CD4-positive, alpha-beta memory T cell (primary cell): ENCODE measurements at regions of chr2 and their contacts with region 1.

Region 1: GRCh38 chr2:231463698-231464575 is at the start of gene NCL:
- DNase-seq: peak; percentile 90 to 96 (median 92)
- H3K4me3 ChIP-seq: peak within 1 kb of the TSS; percentile 77 to 92
- H3K4me3 Mint-ChIP-seq: peak within 1 kb of the TSS; percentile 92 to 98 (median 96)
- H3K27ac ChIP-seq: peak within 1 kb of the TSS; percentile 96
- H3K27ac Mint-ChIP-seq: peak within 1 kb of the TSS; percentile 99 to 100 (median 99)
- H3K4me1 ChIP-seq: peaks cover 51% of the 10 kb centered on the region
- H3K4me1 Mint-ChIP-seq: peaks cover 31 to 59% (median 45%) of the 10 kb centered on the region in 4 donors
- H3K27me3 ChIP-seq: no peaks in the 10 kb centered on the region
- H3K27me3 Mint-ChIP-seq: peaks cover 0 to 3% of the 10 kb centered on the region in 2 donors
- total RNA-seq, gene NCL: 380 to 390 TPM

Region 2: DNA sequence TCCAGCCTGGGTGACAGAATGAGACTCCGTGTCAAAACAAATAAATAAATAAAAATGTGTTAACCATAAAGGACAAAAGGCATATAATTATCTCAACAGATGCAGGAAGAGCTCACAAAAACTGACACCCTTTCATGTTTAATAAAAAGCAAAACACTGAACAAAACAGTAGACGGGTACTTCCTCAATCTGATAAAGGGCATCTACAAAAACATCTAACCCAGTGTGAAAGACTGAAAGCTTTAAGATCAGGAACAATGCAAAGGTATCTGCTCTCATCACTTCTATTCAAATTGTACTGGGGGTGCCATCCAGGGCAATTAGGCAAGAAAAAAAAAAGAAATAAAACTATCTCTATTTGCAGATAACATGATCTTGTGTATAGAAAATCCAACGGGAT is 12.0 kb after region 1 on chr2:
- CTCF ChIA-PET with region 1: interaction called, 111 read pairs
- POLR2A ChIA-PET with region 1: interaction called, 128 read pairs
- intact Hi-C with region 1: no loop called
- DNase-seq: no peak
- H3K4me3 ChIP-seq: no peak overlapping the region
- H3K4me3 Mint-ChIP-seq: no peak overlapping the region
- H3K27ac ChIP-seq: no peak overlapping the region
- H3K27ac Mint-ChIP-seq: peak overlapping the region in 1 of 7 donors; percentile 74
- H3K4me1 ChIP-seq: no peaks in the 10 kb centered on the region
- H3K4me1 Mint-ChIP-seq: peaks cover 0 to 2% (median 0%) of the 10 kb centered on the region in 4 donors
- H3K27me3 ChIP-seq: no peaks in the 10 kb centered on the region
- H3K27me3 Mint-ChIP-seq: peaks cover 0 to 3% of the 10 kb centered on the region in 2 donors

Region 3: GRCh38 chr2:231482806-231483391 is 19.0 kb after region 1 on chr2:
- CTCF ChIA-PET with region 1: interaction called, 111 read pairs
- POLR2A ChIA-PET with region 1: interaction called, 128 read pairs
- intact Hi-C with region 1: loop called (anchors 2 kb)
- DNase-seq: peak; percentile 61 to 68 (median 65)
- H3K4me3 ChIP-seq: peak overlapping the region; percentile 62 to 65
- H3K4me3 Mint-ChIP-seq: peak overlapping the region; percentile 63 to 87 (median 79)
- H3K27ac ChIP-seq: peak overlapping the region; percentile 80
- H3K27ac Mint-ChIP-seq: peak overlapping the region; percentile 81 to 94 (median 89)
- H3K4me1 ChIP-seq: peaks cover 12% of the 10 kb centered on the region
- H3K4me1 Mint-ChIP-seq: peaks cover 4 to 27% (median 5%) of the 10 kb centered on the region in 4 donors
- H3K27me3 ChIP-seq: no peaks in the 10 kb centered on the region
- H3K27me3 Mint-ChIP-seq: no peaks in the 10 kb centered on the region

Region 4: GRCh38 chr2:231662028-231662810 is 198.3 kb after region 1 on chr2:
- CTCF ChIA-PET with region 1: no interaction called
- POLR2A ChIA-PET with region 1: interaction called, 15 read pairs
- intact Hi-C with region 1: loop called (anchors 1 kb)
- DNase-seq: peak; percentile 93 to 99 (median 99)
- H3K4me3 ChIP-seq: peak overlapping the region; percentile 43 to 60
- H3K4me3 Mint-ChIP-seq: peak overlapping the region; percentile 75 to 86 (median 80)
- H3K27ac ChIP-seq: peak overlapping the region; percentile 86
- H3K27ac Mint-ChIP-seq: peak overlapping the region; percentile 90 to 99 (median 97)
- H3K4me1 ChIP-seq: peaks cover 14% of the 10 kb centered on the region
- H3K4me1 Mint-ChIP-seq: peaks cover 5 to 23% (median 13%) of the 10 kb centered on the region in 4 donors
- H3K27me3 ChIP-seq: no peaks in the 10 kb centered on the region
- H3K27me3 Mint-ChIP-seq: no peaks in the 10 kb centered on the region